SK-N-SH (cell line): ENCODE measurements at regions of chr14 and their contacts with region 1.

Region 1: GRCh38 chr14:73886449-73887317 is at the start of gene ZNF410:
- DNase-seq: peak; percentile 96
- H3K4me3 ChIP-seq: peak within 1 kb of the TSS; percentile 84 to 90
- H3K27ac ChIP-seq: peak within 1 kb of the TSS; percentile 92 to 96
- H3K4me1 ChIP-seq: peaks cover 0 to 3% of the 10 kb centered on the region in 2 experiments; a peak in 3 of 4 replicates
- H3K27me3 ChIP-seq: no peaks in the 10 kb centered on the region
- CTCF ChIP-seq: no peak
- EP300 ChIP-seq: peak; percentile 11 to 15; a peak in 2 of 4 replicates
- RAD21 ChIP-seq: 0 out of 2 replicates have a peak, but pooled peaks have one; percentile 3
- polyA plus RNA-seq, gene ZNF410: 22.8 and 28.7 TPM in 2 replicates

Region 2: GRCh38 chr14:73795972-73796371 is 90.7 kb before region 1 on chr14:
- CTCF ChIA-PET with region 1: no interaction called
- POLR2A ChIA-PET with region 1: no interaction called
- DNase-seq: no peak
- H3K4me3 ChIP-seq: no peak overlapping the region
- H3K27ac ChIP-seq: no peak overlapping the region
- H3K4me1 ChIP-seq: peaks cover 0 to 3% of the 10 kb centered on the region in 2 experiments; a peak in 1 of 4 replicates
- H3K27me3 ChIP-seq: no peaks in the 10 kb centered on the region
- CTCF ChIP-seq: no peak
- EP300 ChIP-seq: no peak
- RAD21 ChIP-seq: no peak

Region 3: GRCh38 chr14:73851644-73852382 is 34.9 kb before region 1 on chr14 and contains the start of gene PTGR2:
- CTCF ChIA-PET with region 1: interaction called, 3 read pairs
- POLR2A ChIA-PET with region 1: interaction called, 10 read pairs
- DNase-seq: peak; percentile 98
- H3K4me3 ChIP-seq: peak within 1 kb of the TSS; percentile 59 to 81
- H3K27ac ChIP-seq: peak within 1 kb of the TSS; percentile 86 to 88
- H3K4me1 ChIP-seq: peaks cover 2 to 9% of the 10 kb centered on the region in 2 experiments; a peak in 2 of 4 replicates
- H3K27me3 ChIP-seq: no peaks in the 10 kb centered on the region
- CTCF ChIP-seq: peak; percentile 9; the same call in 1 of the 2 replicates
- EP300 ChIP-seq: no peak; a peak in 1 of 4 replicates
- RAD21 ChIP-seq: no peak
- polyA plus RNA-seq, gene PTGR2: 7.1 and 9.7 TPM in 2 replicates

Region 4: DNA sequence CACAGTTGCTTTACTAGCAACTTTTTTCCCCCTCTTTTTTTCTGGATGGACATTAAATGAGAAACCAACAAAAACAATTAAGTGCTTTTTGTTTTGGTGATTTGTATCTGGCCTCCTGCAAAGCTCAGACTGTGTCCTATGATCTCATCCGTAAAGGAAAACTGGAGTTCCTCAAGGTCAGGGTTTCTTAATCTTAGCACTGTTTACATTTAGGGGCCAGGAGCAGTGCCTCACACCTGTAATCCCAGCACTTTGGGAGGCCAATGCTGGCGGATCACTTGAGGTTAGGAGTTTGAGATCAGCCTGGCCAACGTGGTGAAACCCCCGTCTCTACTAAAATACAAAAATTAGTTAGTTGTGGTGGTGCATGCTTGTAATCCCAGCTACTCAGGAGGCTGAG is 104.4 kb after region 1 on chr14:
- CTCF ChIA-PET with region 1: no interaction called
- POLR2A ChIA-PET with region 1: no interaction called
- DNase-seq: no peak
- H3K4me3 ChIP-seq: no peak overlapping the region
- H3K27ac ChIP-seq: no peak overlapping the region
- H3K4me1 ChIP-seq: no peaks in the 10 kb centered on the region
- H3K27me3 ChIP-seq: no peaks in the 10 kb centered on the region
- CTCF ChIP-seq: no peak
- EP300 ChIP-seq: no peak
- RAD21 ChIP-seq: no peak